ENCODE measurements at regions of chr2 and their contacts with region 1.

Region 1: DNA sequence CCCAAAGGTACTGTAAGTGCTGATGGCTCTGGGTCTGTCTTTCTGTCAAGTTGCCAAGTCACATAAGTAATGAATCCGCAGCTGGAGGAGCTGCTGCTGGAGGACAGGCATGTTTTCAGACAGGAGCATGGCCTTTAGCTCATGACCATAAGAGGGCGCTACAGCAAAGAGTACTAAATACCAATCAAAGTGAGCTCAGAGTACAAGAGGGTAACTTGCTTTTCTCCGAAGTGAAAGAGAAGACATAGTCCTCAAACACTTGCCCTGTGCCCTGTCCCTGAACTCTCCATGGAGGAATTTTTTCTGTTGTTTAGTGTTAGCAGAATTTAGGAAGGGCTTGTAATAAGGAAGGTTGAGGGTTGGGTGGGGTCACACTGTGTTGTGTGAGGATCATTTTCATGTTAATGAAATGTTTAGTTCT is 58.0 kb upstream of the EML6 start:
- DNase-seq: peak; percentile 38
- CTCF ChIP-seq: peak; percentile 54

Region 2: GRCh38 chr2:54652540-54652939 is 12.9 kb before region 1 on chr2:
- CTCF ChIA-PET with region 1: interaction called, 39 read pairs
- POLR2A ChIA-PET with region 1: no interaction called
- DNase-seq: no peak
- CTCF ChIP-seq: no peak

Region 3: GRCh38 chr2:54691445-54692135 is 26.1 kb after region 1 on chr2:
- CTCF ChIA-PET with region 1: interaction called, 18 read pairs
- POLR2A ChIA-PET with region 1: no interaction called
- DNase-seq: no peak
- CTCF ChIP-seq: no peak

Region 4: DNA sequence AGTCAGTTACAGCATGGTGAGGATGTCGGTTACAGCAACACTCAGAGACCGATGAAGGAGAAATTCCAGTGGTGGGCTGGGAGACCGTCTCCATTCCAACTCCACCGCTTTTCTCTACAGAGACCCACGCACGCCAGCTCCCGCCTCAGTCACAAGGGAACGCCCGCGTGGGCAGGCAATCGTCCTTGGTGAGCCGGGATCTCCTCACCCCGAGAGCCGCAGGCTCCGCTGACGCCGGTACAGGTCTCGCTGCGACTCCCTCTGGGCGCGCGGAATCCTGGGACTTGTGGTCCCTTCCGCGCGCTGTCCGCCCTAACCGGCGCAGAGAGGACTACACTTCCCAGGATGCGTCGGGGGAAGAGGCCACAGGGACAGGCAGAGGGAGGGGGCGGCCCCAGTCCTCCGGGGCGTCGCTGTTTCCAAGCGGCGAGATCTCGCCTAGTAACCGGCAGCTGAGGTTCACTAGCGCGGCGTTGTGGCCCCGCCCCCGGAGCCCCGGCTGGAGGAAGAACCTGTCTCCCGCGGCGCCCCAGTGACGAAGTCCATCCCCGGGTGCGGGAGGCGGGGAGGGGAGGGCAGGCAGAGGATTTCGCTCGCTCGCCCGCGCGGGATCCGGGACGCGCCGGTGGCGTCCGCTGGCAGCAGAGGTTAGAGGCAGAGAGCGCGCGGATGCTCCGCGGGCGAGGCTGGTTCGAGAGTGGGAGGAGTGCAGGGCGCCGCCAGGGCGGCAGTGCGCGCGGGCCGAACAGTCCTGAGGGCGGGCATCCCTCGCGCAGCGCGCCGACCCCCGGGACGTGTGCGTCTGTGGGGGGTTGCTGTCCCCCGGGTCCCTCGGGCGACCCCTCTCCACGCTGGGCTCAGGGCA is 57.9 kb after region 1 on chr2 and contains the start of gene EML6:
- CTCF ChIA-PET with region 1: no interaction called
- POLR2A ChIA-PET with region 1: no interaction called
- DNase-seq: peak; percentile 99
- CTCF ChIP-seq: no peak

Measured in GM10248 (cell line).